Left ventricle myocardium inferior (tissue), 1 donor: ENCODE measurements at regions of chr16 and their contacts with region 1.

Region 1: DNA sequence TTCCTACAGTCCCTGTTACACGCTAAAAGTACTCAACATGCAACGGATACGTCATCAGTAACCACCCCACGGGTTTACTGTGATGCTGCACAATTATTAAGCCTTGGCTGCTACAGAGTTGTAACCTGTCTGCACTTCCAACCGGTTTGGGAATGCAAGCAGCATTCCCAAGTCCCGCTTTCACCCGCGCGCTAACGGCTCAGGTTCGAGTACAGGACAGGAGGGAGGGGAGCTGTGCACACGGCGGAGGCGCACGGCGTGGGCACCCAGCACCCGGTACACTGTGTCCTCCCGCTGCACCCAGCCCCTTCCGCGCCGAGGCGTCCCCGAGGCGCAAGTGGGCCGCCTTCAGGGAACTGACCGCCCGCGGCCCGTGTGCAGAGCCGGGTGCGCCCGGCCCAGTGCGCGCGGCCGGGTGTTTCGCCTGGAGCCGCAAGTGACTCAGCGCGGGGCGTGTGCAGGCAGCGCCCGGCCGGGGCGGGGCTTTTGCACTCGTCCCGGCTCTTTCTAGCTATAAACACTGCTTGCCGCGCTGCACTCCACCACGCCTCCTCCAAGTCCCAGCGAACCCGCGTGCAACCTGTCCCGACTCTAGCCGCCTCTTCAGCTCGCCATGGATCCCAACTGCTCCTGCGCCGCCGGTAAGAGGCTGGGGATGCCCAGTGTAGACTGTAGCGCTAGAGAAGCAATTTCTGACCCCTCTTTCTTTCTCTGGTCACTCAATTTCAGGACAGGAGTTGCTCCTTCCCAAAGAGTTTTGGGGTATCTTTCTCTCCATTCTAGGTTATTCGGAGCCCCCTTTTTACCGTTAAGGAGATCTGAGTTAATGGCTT is at the start of gene MT2A:
- DNase-seq: peak; percentile 97
- H3K4me3 ChIP-seq: peak within 1 kb of the TSS; percentile 78
- H3K27ac ChIP-seq: peak within 1 kb of the TSS; percentile 95
- H3K4me1 ChIP-seq: peaks cover 66% of the 10 kb centered on the region
- H3K27me3 ChIP-seq: no peaks in the 10 kb centered on the region
- CTCF ChIP-seq: no peak
- total RNA-seq, gene MT2A: 115 TPM

Region 2: GRCh38 chr16:56488035-56488434 is 120.2 kb before region 1 on chr16:
- intact Hi-C with region 1: no loop called
- DNase-seq: no peak
- H3K4me3 ChIP-seq: no peak overlapping the region
- H3K27ac ChIP-seq: no peak overlapping the region
- H3K4me1 ChIP-seq: peaks cover 3% of the 10 kb centered on the region
- H3K27me3 ChIP-seq: no peaks in the 10 kb centered on the region
- CTCF ChIP-seq: no peak

Region 3: GRCh38 chr16:56519459-56520250 is 88.6 kb before region 1 on chr16 and contains the start of gene BBS2:
- intact Hi-C with region 1: loop called (anchors 10 kb)
- DNase-seq: peak; percentile 92
- H3K4me3 ChIP-seq: peak within 1 kb of the TSS; percentile 97
- H3K27ac ChIP-seq: peak within 1 kb of the TSS; percentile 95
- H3K4me1 ChIP-seq: peaks cover 56% of the 10 kb centered on the region
- H3K27me3 ChIP-seq: no peaks in the 10 kb centered on the region
- CTCF ChIP-seq: no peak
- total RNA-seq, gene BBS2: 48.7 TPM